ENCODE measurements at regions of chr12 and their contacts with region 1.

Region 1: DNA sequence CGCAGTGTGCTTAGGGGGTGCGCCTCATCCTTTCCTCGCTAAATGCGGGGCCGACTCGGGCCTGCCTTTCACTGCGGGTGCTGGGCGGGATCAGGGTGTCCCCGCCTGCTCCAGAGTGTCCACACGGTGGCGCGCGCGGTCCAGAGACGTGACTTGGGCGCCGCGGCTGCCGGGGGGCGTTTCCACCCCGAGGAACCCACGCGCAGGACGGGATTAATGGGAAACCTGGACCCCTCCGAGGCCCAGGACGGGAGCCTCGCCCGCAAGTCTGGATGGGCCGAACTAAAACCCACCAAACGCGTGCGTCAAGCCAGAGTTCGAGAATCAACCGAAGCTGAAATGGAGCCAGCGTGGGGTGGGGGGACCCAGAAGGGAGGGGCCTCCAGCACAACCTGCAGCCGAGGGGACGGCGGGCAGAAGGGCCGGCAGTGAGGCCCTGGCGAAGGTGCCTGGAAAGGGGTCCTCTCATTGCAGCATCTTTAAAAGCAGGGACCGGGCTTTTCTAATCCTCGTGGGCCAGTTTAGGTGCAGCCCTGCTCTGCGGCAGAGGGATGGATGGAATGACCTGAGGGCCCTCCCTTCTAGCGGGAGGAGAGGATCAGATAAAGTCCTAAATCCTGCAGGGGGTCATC is 93.3 kb downstream of the NINJ2 start:
- DNase-seq: peak; percentile 93

Region 2: DNA sequence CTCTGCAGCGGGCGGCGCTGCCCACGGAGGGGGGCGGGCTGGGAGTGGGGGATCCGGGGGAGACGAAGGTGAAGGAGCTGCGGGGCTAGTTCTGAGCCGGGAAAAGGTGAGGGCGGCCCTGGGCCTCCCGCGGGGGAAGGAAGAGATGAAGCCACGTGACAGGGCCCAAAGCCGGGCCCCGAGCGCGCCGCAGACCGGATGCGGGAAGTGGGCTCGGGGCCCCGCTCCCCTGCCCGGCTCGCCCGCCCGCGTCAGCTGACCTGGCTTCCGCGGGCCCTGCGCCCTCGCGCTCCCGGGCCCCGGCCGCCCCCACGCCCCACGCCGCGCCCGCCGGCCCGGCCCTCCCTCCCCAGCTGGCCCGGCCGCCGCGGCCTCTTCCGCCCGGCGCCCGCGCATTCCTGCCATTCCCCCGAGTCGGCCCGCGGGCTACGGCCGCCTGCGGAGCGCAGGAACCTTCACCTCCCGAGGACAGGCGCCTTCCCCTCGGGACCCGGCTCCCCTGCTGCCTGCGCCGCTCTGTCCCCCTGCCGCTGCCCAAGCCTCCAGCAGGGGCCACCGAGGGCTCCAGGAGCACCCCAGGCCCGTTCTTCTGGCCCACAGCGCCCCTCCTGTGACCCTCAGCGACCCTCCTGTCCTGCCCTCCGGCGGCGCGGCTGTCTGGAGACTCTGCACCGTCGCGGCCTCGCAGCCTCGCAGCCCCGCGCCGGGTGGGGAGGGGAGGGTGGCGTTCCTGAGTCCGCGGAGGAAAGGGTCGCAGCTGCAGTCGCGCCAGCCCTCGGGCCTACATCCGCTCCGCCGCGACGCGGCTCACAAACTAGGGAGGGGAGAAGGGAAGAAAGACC is 72.9 kb after region 1 on chr12:
- intact Hi-C with region 1: loop called (anchors 1 kb)
- DNase-seq: peak; percentile 93

Region 3: GRCh38 chr12:751192-751998 is 181.5 kb after region 1 on chr12:
- intact Hi-C with region 1: loop called (anchors 2 kb)
- DNase-seq: peak; percentile 96

Region 4: GRCh38 chr12:810671-811415 is 240.9 kb after region 1 on chr12:
- intact Hi-C with region 1: loop called (anchors 2 kb)
- DNase-seq: no peak

Region 5: GRCh38 chr12:879641-880040 is 309.7 kb after region 1 on chr12:
- intact Hi-C with region 1: loop called (anchors 10 kb)
- DNase-seq: no peak

Region 6: GRCh38 chr12:949453-950191 is 379.7 kb after region 1 on chr12 and contains the start of gene RAD52:
- intact Hi-C with region 1: loop called (anchors 2 kb)
- DNase-seq: peak; percentile 99
- total RNA-seq, gene RAD52: 9.2 TPM

Region 7: DNA sequence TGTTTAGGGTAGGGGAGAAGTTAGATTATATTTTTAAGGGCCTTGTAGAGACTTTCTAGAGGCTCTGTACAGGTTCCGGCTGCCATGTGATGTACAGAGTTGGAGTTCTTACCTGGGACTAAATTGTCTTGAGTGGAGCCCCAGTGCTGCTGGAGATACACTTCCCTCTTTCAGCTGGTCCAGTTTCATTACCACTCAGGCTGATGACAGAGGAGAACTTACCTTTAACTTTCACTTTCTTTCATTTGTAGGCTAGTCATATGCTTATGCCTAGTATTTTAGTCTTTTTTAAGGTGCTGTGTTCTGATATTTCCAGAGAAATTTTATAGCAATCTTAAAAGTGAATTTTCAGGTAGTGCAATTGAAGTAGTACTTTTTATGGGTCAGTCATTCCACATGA is 538.4 kb after region 1 on chr12:
- intact Hi-C with region 1: loop called (anchors 10 kb)
- DNase-seq: no peak

Measured in cardiac septum (tissue), 1 donor.